ENCODE measurements at regions of chr3 and their contacts with region 1.

Region 1: GRCh38 chr3:65785065-65785645 is 253.6 kb downstream of the MAGI1 start:
- DNase-seq: peak; percentile 43
- CTCF ChIP-seq: peak; percentile 59

Region 2: GRCh38 chr3:65575373-65575840 is 209.7 kb before region 1 on chr3:
- in situ Hi-C with region 1: no loop called
- DNase-seq: no peak
- CTCF ChIP-seq: no peak

Region 3: GRCh38 chr3:65888980-65889706 is 104.0 kb after region 1 on chr3:
- in situ Hi-C with region 1: no loop called
- DNase-seq: no peak
- CTCF ChIP-seq: no peak

Region 4: DNA sequence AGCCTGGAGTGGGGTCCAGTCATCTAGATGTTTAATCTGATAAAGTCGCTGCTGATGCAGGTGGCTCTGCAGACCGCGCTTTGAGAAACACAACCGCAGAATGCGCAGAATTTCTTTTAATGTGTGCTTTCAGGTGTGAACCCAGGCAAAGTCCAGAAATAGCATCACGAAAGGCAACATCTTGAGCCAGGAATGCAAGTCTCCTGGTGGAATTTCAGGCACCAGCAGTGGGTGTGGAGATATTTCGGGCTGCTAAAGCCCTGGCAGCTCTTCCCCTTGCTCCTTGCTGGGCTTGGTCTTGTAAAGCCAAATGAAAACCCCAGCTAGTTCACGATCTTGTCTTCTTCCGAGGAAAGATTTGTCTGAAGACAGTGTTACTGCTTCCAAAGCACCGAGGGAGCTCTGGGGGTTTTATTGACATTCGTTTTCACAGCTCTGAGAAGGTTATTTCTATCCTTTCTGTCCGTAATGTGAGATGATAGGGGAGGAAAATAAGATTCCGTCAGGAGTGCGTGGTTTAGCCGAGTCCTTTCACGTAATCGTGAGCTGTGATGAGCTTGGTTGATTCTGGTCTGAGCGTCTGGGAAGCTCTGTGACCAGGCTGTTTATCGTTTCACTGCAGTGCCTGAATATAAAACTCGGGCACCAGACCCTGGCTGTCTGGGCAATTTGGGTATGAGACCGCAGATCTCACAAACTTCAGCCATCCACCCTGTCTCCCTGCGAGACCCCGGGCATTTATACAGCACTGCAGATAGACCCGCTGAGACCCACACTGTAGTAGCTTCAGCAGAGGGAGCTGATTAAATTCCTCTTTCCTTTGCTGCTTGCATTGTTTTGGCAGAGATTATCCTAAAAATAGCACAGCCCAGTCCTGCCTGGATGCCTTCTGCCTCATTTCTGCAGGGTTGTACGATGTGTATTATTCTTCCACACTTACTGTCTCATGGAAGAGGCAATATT is 368.6 kb after region 1 on chr3:
- in situ Hi-C with region 1: loop called (anchors 25 kb)
- DNase-seq: no peak
- CTCF ChIP-seq: no peak